ENCODE measurements at regions of chr9 and their contacts with region 1.

Region 1: DNA sequence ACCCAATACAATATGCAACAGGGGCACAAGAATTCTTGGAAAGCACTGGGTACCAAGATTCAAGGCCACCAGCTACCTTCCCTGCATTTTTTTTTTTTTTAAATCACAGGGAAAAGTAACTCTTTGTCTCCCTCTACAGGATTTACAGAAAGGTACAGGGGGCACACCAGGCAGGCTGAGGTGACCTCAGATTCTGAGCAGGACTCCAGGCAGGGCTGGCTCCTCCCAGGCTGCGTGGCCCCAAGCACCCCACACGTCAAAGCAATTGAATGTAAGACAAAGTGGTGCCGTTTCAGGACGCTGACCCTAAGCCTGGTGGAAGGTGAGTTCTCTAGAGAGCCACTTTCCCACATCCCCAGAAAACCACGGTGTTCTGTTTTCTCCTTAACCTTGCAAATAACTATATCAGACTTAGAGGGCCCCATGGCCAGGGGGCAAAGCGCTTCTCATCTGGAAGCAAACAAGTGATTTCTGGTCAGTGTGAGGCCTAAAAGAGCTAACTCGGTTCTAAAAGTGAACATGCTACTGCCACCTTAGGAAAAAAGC is 222.6 kb downstream of the ROR2 start:
- DNase-seq: peak; percentile 68
- ATAC-seq: peak; percentile 98
- H3K4me3 Mint-ChIP-seq: no peak overlapping the region
- H3K27ac Mint-ChIP-seq: peak overlapping the region; percentile 39
- H3K4me1 Mint-ChIP-seq: peaks cover 12% of the 10 kb centered on the region
- H3K27me3 Mint-ChIP-seq: peaks cover 5% of the 10 kb centered on the region

Region 2: GRCh38 chr9:91433180-91433579 is 294.2 kb before region 1 on chr9:
- CTCF ChIA-PET with region 1: interaction called, 11 read pairs
- DNase-seq: no peak
- ATAC-seq: peak; percentile 95
- H3K4me3 Mint-ChIP-seq: no peak overlapping the region
- H3K27ac Mint-ChIP-seq: no peak overlapping the region
- H3K4me1 Mint-ChIP-seq: peaks cover 30% of the 10 kb centered on the region
- H3K27me3 Mint-ChIP-seq: peaks cover 19% of the 10 kb centered on the region

Region 3: DNA sequence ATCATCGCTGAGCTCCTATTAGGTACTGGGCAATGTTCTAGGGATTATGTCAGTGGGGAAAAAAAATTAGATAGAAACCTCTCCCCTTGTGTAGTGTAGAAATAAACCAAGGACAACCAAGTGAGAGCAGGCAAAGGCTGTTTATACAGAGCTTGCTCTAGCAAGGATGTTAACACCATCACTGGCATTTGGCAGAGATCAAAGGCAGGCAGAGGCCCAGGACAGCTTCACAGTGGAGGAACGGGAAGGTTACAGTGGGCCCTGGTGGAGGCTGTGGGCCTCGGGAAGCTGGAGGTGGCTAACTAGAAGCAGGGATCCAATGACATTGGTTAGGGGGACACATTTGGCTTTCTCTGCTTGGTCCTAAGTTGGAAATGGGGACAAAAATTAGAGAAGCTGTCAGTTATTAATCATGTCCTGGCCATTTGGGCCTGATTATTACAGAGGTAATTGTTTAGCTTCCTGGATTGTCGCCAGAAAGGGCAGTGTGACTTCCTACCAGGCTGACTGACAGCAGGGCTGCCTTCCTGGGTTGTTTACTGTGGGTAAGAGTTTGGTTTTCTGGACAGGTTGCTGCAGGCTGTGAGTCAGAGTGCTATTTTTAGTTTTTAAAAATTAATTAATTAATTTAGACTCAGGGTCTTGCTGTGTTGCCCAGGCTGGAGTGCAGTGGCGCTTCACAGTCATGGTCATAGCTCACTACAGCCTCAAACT is 36.7 kb before region 1 on chr9:
- CTCF ChIA-PET with region 1: no interaction called
- DNase-seq: no peak
- ATAC-seq: no peak
- H3K4me3 Mint-ChIP-seq: no peak overlapping the region
- H3K27ac Mint-ChIP-seq: peak overlapping the region; percentile 6
- H3K4me1 Mint-ChIP-seq: peaks cover 9% of the 10 kb centered on the region
- H3K27me3 Mint-ChIP-seq: no peaks in the 10 kb centered on the region

Region 4: GRCh38 chr9:91705386-91705785 is 22.0 kb before region 1 on chr9:
- CTCF ChIA-PET with region 1: no interaction called
- DNase-seq: no peak
- ATAC-seq: no peak
- H3K4me3 Mint-ChIP-seq: no peak overlapping the region
- H3K27ac Mint-ChIP-seq: no peak overlapping the region
- H3K4me1 Mint-ChIP-seq: no peaks in the 10 kb centered on the region
- H3K27me3 Mint-ChIP-seq: peaks cover 18% of the 10 kb centered on the region